ENCODE measurements at regions of chr14 and their contacts with region 1.

Region 1: DNA sequence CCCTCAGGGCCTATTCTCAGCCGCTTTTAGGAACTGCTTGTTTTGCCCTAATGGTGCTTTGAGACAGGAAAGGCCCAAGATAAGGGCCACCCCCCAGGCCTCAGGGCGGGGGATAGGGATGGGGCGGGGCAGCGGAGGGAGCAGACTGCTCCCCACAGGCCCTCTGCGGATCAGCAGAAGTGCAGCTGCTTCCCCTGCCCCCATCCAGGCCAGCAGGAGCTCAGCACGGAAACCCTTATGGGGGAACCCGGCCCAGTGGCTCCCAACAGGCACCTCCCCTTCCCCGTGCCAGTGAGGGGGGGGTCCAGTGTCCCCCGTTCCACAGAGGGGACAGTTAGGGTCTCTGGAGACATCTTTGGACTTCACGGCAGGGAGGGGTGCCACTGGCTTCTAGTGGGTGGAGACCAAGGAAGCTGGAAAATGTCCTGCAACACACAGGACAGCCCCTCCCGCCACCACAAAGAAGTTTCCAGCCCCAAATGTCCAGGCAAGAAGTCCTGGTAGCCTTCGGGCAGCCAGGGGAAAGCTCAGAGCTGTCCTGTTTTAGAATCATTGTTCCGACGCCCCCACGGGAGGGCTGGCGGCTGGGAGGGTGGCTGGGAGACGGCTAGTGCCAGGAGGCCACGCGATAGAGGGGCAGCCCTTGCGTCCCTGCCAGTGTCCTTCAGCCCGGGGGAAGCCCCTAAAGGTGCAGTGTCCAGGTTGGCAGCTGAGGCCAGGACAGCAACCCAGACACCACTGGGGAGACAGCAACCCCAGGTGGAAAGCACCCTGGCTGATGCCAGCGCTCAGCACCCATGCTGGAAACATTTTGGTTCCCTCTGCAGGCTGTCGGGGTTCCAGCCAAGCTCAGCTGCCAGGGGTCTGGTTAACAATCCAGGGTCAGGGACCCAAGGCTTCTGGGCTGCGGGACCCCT is 10.4 kb upstream of the GPR132 start:
- DNase-seq: no peak
- H3K4me3 ChIP-seq: no peak overlapping the region
- H3K27ac ChIP-seq: no peak overlapping the region
- H3K4me1 ChIP-seq: no peaks in the 10 kb centered on the region
- H3K27me3 ChIP-seq: peaks cover 2% of the 10 kb centered on the region
- CTCF ChIP-seq: no peak

Region 2: DNA sequence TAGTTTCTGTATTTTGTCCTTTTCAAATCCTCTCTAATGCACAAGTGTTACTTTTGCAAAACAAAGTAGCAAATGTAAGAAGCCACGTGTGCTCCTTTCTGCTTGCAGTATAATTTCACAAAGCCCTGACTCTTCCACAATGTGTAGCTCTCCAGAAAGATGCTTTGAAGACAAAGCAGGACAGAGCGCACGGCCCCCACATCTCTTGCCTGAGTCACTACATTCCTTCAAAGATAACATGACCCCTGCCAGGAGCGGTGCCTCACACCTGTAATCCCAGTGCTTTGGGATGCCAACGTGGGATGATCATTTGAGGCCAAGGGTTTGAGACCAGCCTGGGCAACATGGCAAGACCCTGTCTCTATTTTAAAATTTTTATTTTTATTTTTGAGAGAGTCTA is 52.4 kb after region 1 on chr14:
- CTCF ChIA-PET with region 1: no interaction called
- POLR2A ChIA-PET with region 1: interaction called, 13 read pairs
- intact Hi-C with region 1: no loop called
- DNase-seq: no peak
- H3K4me3 ChIP-seq: no peak overlapping the region
- H3K27ac ChIP-seq: no peak overlapping the region
- H3K4me1 ChIP-seq: no peaks in the 10 kb centered on the region
- H3K27me3 ChIP-seq: peaks cover 25% of the 10 kb centered on the region
- CTCF ChIP-seq: no peak

Region 3: GRCh38 chr14:105300792-105301533 is 225.3 kb after region 1 on chr14 and contains the start of gene BRF1:
- CTCF ChIA-PET with region 1: no interaction called
- POLR2A ChIA-PET with region 1: interaction called, 16 read pairs
- intact Hi-C with region 1: no loop called
- DNase-seq: peak; percentile 97
- H3K4me3 ChIP-seq: peak within 1 kb of the TSS; percentile 88
- H3K27ac ChIP-seq: peak within 1 kb of the TSS; percentile 91
- H3K4me1 ChIP-seq: no peaks in the 10 kb centered on the region
- H3K27me3 ChIP-seq: no peaks in the 10 kb centered on the region
- CTCF ChIP-seq: no peak
- total RNA-seq, gene BRF1: 41.8 and 48.0 TPM in 2 replicates